Activated CD4-positive, alpha-beta memory T cell treated with anti-CD3 and anti-CD28 coated beads, Interleukin-2, amount 10 ng/mL, durations not matched to agents 7 days and 5 days (primary cell): ENCODE measurements at regions of chr2 and their contacts with region 1.

Region 1: DNA sequence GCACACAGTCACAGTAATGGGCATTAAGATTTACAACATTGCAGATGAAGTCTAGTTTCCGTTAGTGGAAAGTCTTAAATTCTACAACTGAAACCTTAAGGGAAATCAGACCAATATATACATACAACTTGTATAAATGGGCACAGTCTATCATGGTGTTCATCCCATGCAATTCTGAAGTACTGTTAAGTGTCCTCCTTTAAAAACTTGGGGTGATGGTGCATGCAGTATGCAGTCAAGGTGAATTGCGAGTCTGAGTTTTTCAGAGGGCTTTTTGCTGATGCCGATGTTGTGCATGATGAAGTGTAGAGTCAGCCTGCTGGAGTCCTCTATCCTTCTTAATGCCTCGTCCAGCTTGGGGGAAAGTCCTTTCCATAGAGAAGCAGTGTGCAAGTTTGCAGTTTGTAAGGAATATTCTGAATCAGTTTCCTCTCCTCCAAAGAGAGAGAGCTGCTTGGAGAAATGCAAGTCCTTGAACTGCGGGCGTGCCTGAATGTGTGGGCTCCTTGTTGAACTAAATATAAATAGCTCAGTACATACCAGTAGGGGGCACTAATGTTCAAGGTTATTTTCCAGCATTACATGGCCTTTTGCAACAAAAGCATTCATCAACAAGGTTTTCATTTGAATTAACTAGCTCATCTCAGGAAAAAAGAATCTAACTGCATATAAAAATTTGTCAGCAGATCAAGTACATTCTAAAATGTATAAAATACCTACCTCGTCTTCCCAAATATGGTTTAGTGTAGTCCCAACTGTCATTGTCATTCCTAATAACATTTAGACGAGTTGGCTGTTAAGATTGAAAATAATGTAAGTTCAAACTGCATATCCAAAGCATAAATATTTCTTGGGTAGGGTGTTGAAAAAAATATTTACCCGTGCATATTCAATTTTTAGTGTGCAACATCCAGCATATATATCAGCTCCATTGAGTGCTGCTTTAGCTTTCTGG is 21.3 kb downstream of the HNRNPLL start:
- DNase-seq: peak; percentile 36
- H3K4me3 Mint-ChIP-seq: no peak overlapping the region
- H3K27ac Mint-ChIP-seq: peak overlapping the region; percentile 61
- H3K4me1 Mint-ChIP-seq: peaks cover 74% of the 10 kb centered on the region
- H3K27me3 Mint-ChIP-seq: no peaks in the 10 kb centered on the region

Region 2: GRCh38 chr2:38394903-38395341 is 186.5 kb before region 1 on chr2:
- CTCF ChIA-PET with region 1: no interaction called
- POLR2A ChIA-PET with region 1: no interaction called
- DNase-seq: no peak
- H3K4me3 Mint-ChIP-seq: no peak overlapping the region
- H3K27ac Mint-ChIP-seq: no peak overlapping the region
- H3K4me1 Mint-ChIP-seq: peaks cover 17% of the 10 kb centered on the region
- H3K27me3 Mint-ChIP-seq: peaks cover 22% of the 10 kb centered on the region

Region 3: DNA sequence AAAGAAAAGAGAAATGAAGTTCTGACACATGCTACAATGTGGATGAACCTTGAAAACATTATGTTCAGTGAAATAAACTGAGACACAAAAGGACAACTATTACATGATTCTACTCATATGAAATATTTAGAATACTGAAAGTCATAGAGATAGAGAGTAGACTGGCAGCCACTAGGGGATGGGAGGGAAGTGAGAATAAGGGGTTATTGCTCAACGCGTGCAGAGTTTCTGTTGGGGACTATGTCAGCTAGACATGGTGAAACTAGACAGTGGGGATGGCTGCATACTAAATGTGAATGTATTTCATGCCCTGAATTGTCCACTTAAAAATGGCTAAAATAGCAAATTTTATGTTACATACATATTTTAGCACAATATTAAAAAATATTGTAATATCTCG is 95.7 kb before region 1 on chr2:
- CTCF ChIA-PET with region 1: no interaction called
- POLR2A ChIA-PET with region 1: no interaction called
- DNase-seq: no peak
- H3K4me3 Mint-ChIP-seq: no peak overlapping the region
- H3K27ac Mint-ChIP-seq: no peak overlapping the region
- H3K4me1 Mint-ChIP-seq: no peaks in the 10 kb centered on the region
- H3K27me3 Mint-ChIP-seq: peaks cover 2% of the 10 kb centered on the region

Region 4: GRCh38 chr2:38565333-38565732 is 16.1 kb before region 1 on chr2:
- CTCF ChIA-PET with region 1: interaction called, 28 read pairs
- POLR2A ChIA-PET with region 1: interaction called, 5 read pairs
- DNase-seq: no peak
- H3K4me3 Mint-ChIP-seq: no peak overlapping the region
- H3K27ac Mint-ChIP-seq: no peak overlapping the region
- H3K4me1 Mint-ChIP-seq: peaks cover 7% of the 10 kb centered on the region
- H3K27me3 Mint-ChIP-seq: no peaks in the 10 kb centered on the region

Region 5: DNA sequence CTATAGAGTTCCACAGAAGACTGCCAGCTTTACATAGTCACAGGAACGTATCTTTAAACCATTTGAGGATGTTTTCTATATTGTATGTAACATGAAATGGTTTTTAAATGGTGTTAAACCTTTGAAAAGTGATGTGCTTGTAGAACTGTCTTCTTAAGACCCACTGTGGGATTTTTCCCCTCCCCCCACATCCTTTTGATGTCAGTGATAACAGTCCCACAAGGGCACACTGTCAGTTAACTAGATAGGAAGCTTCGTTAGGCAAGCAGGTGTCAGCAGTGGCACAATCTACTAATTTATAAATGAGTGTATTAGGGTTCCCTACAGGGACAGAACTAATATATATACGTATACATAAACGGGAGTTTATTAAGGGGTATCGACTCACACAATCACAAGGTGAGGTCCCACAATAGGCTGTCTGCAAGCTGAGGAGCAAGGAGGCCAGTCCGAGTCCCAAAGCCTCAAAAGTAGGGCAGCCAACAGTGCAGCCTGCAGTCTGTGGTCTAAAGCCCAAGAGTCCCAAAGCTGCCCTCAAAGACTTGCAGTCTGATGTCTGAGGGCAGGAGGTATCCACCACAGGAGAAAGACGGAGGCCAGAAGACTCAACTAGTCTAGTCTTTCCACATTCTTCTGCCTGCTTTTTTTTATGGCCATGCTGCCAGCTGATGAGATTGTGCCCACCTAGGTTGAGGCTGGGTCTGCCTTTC is 45.0 kb after region 1 on chr2:
- CTCF ChIA-PET with region 1: interaction called, 10 read pairs
- POLR2A ChIA-PET with region 1: no interaction called
- DNase-seq: peak; percentile 72
- H3K4me3 Mint-ChIP-seq: peak overlapping the region; percentile 2
- H3K27ac Mint-ChIP-seq: peak overlapping the region; percentile 69
- H3K4me1 Mint-ChIP-seq: peaks cover 36% of the 10 kb centered on the region
- H3K27me3 Mint-ChIP-seq: no peaks in the 10 kb centered on the region

Region 6: DNA sequence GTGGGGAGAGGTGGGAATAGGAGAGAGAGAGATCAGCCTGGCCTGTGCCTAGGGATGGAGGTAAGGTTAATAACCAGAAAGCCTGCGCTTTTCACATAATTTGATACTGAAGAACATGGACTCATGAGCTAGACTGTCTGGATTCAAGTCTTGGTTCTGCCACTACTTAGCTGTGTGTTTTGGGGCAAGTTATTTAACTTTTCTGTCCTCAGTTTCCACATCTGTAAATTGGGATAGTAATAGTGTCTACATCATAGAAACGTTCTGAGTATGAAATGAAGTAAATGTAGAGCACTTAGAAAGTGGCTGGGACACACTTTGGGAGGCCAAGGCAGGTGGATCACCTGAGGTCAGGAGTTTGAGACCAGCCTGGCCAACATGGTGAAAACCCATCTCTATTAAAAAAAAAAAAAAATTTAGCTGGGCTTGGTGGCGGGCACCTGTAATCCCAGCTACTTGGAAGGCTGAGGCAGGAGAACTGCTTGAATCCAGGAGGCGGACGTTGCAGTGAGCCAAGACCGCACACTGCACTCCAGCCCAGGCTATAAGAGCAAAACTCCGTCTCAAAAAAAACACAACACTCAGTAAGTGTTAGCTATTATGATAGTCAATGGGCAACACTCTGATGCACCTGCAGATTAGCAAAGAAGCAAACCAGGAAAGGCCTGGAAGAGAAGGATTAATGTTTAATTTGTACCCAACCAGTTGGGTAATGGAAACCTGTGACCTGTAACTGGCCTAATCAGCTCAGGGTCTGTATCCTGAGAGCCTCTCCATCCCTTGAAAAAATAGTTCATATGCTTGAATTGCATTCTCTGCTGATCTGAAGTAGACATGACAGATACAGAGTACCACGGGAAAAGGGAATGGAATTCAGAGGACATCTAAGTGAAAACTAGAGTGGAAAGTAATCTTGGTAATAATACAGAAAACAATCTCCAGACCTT is 91.2 kb after region 1 on chr2:
- CTCF ChIA-PET with region 1: interaction called, 20 read pairs
- POLR2A ChIA-PET with region 1: interaction called, 16 read pairs
- DNase-seq: no peak
- H3K4me3 Mint-ChIP-seq: no peak overlapping the region
- H3K27ac Mint-ChIP-seq: peak overlapping the region; percentile 9
- H3K4me1 Mint-ChIP-seq: peaks cover 79% of the 10 kb centered on the region
- H3K27me3 Mint-ChIP-seq: no peaks in the 10 kb centered on the region

Region 7: DNA sequence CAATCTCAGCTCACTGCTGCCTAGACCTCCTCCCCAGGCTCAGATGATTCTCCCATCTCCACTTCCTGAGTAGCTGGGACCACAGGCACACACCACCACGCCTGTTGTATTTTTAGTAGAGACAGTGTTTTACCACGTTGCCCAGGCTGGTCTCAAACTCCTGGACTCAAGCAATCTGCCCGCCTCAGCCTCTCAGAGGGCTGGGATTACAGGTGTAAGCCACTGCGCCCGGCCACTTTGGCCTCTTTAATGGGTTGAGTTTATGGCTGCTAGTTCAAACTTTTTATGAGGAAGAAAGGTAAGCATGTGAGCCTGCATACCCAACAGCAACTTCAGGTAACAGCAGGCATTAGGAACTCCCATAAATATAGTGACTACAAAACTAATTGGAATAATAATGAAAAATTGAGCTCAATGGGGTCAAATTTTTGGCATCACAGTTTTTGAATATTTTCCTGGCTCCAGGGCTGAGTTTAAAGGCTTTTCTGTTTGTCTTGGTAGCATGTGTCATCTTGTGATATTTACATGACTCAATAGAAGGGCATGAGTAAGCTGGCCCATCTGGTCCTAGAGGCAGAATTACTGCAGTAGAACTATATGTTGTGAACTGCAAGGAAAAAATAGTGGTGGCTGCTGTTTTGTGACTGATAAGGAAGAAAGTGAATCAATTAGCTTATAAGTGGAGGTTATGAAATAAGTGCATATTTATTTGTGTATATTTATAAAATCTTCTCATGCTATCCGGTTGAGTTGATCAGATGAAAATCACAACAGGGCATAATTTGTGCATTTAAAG is 109.2 kb after region 1 on chr2:
- CTCF ChIA-PET with region 1: interaction called, 19 read pairs
- POLR2A ChIA-PET with region 1: interaction called, 4 read pairs
- DNase-seq: no peak
- H3K4me3 Mint-ChIP-seq: no peak overlapping the region
- H3K27ac Mint-ChIP-seq: peak overlapping the region; percentile 44
- H3K4me1 Mint-ChIP-seq: peaks cover 77% of the 10 kb centered on the region
- H3K27me3 Mint-ChIP-seq: no peaks in the 10 kb centered on the region

Region 8: DNA sequence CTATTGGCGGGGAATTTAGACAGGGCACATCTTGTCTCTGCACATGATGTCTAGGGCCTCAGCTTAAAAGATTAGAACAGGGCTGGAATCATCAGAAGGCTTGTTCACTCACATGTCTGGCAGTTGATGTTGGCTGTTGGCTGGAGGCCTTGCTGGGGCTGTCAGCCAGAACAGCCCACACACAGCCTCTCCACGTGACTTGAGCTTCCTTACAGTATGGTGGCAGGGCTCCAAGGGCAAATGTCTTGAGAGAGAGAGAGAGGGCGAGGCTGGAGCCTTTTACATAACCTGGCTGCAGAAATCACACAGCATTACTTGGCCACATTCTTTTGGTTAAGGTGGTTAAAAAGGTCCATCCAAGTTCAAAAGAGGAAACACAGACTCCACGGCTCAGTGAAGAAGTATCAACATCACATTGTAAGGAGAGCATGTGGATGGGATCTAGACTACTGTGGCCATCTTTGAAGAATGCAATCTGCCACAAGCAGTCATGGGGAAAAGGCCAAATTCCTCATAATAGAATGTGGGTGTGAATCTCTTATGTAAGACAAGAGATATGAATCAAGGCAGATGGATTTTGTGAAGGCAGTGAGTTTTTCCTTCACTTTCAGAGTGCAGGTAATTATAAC is 139.3 kb after region 1 on chr2:
- CTCF ChIA-PET with region 1: interaction called, 131 read pairs
- POLR2A ChIA-PET with region 1: interaction called, 10 read pairs
- DNase-seq: no peak
- H3K4me3 Mint-ChIP-seq: no peak overlapping the region
- H3K27ac Mint-ChIP-seq: peak overlapping the region; percentile 70
- H3K4me1 Mint-ChIP-seq: peaks cover 65% of the 10 kb centered on the region
- H3K27me3 Mint-ChIP-seq: no peaks in the 10 kb centered on the region

Region 9: DNA sequence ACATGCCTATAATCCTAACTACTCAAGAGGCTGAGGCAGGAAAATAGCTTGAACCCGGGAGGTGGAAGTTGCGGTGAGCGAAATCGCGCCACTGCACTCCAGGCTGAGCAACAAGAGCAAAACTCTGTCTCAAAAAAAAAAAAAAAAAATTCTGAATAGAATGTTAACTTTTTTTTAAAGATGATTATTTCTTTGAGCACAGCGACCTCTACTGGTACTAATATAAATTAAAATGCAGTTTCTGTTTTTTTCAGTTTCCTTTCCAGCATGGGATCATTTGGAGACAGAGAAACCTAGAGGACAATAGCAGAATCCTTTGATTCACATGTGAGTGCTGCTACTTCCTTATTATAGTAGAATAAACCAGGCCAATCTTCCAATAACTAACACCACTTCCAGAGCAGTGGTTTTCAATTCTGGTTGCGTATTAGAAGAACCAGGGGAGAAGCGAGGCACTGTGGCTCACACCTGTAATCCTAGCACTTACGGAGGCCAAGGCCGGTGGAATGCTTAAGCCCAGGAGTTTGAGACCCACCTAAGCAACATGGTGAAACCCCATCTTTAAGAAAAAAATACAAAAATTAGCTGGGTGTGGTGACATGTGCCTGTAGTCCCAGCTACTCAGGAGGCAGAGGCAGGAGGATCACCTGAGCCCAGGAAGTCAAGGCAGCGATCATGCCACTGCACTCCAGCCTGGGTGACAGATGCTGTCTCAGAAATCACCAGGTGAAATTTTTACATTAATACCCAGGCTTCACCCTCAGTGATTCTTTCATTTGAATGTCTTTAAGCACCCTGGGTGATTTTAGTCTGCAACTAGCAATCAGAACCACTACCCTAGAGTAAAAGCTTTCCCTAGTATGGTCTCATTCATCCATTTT is 159.6 kb after region 1 on chr2:
- CTCF ChIA-PET with region 1: interaction called, 88 read pairs
- POLR2A ChIA-PET with region 1: interaction called, 29 read pairs
- DNase-seq: no peak
- H3K4me3 Mint-ChIP-seq: no peak overlapping the region
- H3K27ac Mint-ChIP-seq: peak overlapping the region; percentile 49
- H3K4me1 Mint-ChIP-seq: peaks cover 57% of the 10 kb centered on the region
- H3K27me3 Mint-ChIP-seq: no peaks in the 10 kb centered on the region